Head of caudate nucleus (tissue), 42 donors: ENCODE measurements at regions of chr4 and their contacts with region 1.

Region 1: GRCh38 chr4:42519803-42520417 is 122.6 kb downstream of the SHISA3 start:
- DNase-seq: peak in 29 of 42 donors; percentile 7 to 88 (median 60)

Region 2: GRCh38 chr4:42278709-42279323 is 241.1 kb before region 1 on chr4:
- intact Hi-C with region 1: loop called (anchors 5 kb)
- DNase-seq: no peak

Region 3: DNA sequence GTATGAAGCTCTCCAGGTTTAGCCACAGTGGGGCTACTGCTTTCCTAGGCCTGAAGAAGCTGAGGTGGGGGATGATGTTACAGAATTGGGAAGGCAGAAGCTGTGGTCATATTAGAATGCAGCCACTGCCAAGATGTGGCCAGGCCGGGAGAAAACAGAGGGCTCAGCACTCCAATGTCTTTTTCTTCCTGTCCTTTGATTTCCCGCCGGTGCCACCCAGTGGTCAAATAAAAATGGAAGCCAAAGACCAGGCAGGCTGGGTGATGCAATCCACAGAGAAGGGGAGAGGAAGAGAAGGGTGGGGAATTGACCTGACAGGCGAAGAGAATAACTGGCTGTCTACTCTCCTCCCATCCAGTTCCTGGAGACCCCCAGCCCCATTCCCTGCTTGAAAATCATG is 217.6 kb before region 1 on chr4:
- intact Hi-C with region 1: no loop called
- DNase-seq: peak in 41 of 42 donors; percentile 12 to 86 (median 51)

Region 4: GRCh38 chr4:42371306-42372252 is 148.3 kb before region 1 on chr4:
- intact Hi-C with region 1: loop called (anchors 5 kb)
- DNase-seq: peak in 19 of 42 donors; percentile 6 to 64 (median 31)